ENCODE measurements at regions of chr20 and their contacts with region 1.

Region 1: GRCh38 chr20:35092524-35093266 is at the start of gene TRPC4AP:
- DNase-seq: peak; percentile 94 to 99
- H3K4me3 ChIP-seq: peak within 1 kb of the TSS; percentile 79
- H3K4me3 Mint-ChIP-seq: peak within 1 kb of the TSS; percentile 86
- H3K27ac Mint-ChIP-seq: peak within 1 kb of the TSS; percentile 95
- H3K4me1 ChIP-seq: peaks cover 16% of the 10 kb centered on the region
- H3K4me1 Mint-ChIP-seq: peaks cover 20% of the 10 kb centered on the region
- H3K27me3 ChIP-seq: no peaks in the 10 kb centered on the region
- H3K27me3 Mint-ChIP-seq: no peaks in the 10 kb centered on the region
- CTCF ChIP-seq: peak; percentile 99 to 100
- total RNA-seq, gene TRPC4AP: 144 and 146 TPM in 2 replicates

Region 2: GRCh38 chr20:34781220-34781619 is 311.5 kb before region 1 on chr20:
- CTCF ChIA-PET with region 1: no interaction called
- POLR2A ChIA-PET with region 1: no interaction called
- intact Hi-C with region 1: no loop called
- DNase-seq: no peak
- H3K4me3 ChIP-seq: no peak overlapping the region
- H3K4me3 Mint-ChIP-seq: no peak overlapping the region
- H3K27ac Mint-ChIP-seq: no peak overlapping the region
- H3K4me1 ChIP-seq: no peaks in the 10 kb centered on the region
- H3K4me1 Mint-ChIP-seq: peaks cover 2% of the 10 kb centered on the region
- H3K27me3 ChIP-seq: no peaks in the 10 kb centered on the region
- H3K27me3 Mint-ChIP-seq: no peaks in the 10 kb centered on the region
- CTCF ChIP-seq: no peak

Region 3: DNA sequence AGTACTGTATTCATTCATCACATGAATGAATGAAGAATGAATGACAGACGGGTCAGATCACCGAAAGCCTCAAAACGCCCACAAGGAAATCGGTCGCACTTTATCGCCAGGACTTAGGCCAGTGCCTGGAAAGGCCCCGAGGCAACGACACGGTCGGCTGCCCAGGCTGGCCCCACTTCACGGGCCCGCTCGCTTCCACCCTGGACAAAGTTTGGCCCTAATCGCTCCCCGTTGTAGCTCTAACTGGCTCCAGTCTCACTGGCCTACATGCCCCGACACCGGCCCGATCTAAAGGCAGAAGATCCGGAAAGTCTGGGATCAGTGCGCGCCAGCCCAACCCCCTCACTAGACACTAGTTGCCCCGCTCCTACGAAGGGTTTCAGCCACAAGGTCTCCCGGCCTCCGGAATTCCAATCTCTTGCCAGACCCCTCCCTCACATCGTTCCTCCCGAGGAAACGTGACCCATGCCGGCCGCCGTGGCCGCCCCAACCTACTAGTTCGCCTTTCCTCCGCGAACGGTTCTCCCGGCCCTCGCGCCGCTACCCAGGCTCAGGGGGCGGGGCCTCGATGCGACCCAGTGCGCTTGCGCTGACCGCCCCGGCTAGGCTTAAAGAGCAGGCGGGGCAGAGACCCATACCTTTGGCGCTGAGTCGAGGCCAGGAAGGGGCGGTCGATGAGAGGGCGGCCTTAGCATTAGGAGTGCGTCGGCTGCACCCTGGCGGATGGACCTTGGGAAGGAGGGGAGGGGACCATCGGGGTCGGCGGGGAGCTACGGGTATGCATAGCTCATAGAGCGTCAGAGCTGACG is 137.3 kb before region 1 on chr20 and contains the starts of genes GSS and MYH7B:
- CTCF ChIA-PET with region 1: interaction called, 9 read pairs
- POLR2A ChIA-PET with region 1: interaction called, 5 read pairs
- intact Hi-C with region 1: loop called (anchors 1 kb)
- DNase-seq: peak; percentile 100
- H3K4me3 ChIP-seq: peak within 1 kb of the TSS; percentile 57
- H3K4me3 Mint-ChIP-seq: peak within 1 kb of the TSS; percentile 90
- H3K27ac Mint-ChIP-seq: peak within 1 kb of the TSS; percentile 96
- H3K4me1 ChIP-seq: peaks cover 5% of the 10 kb centered on the region
- H3K4me1 Mint-ChIP-seq: peaks cover 25% of the 10 kb centered on the region
- H3K27me3 ChIP-seq: no peaks in the 10 kb centered on the region
- H3K27me3 Mint-ChIP-seq: no peaks in the 10 kb centered on the region
- CTCF ChIP-seq: peak; percentile 64 to 83
- total RNA-seq, gene GSS: 138 TPM in 2 replicates
- total RNA-seq, gene MYH7B: 1.9 and 2.5 TPM in 2 replicates

Region 4: GRCh38 chr20:35104685-35105295 is 12.1 kb after region 1 on chr20:
- CTCF ChIA-PET with region 1: interaction called, 12 read pairs
- POLR2A ChIA-PET with region 1: no interaction called
- intact Hi-C with region 1: no loop called
- DNase-seq: no peak
- H3K4me3 ChIP-seq: no peak overlapping the region
- H3K4me3 Mint-ChIP-seq: no peak overlapping the region
- H3K27ac Mint-ChIP-seq: no peak overlapping the region
- H3K4me1 ChIP-seq: no peaks in the 10 kb centered on the region
- H3K4me1 Mint-ChIP-seq: no peaks in the 10 kb centered on the region
- H3K27me3 ChIP-seq: no peaks in the 10 kb centered on the region
- H3K27me3 Mint-ChIP-seq: peaks cover 8% of the 10 kb centered on the region
- CTCF ChIP-seq: no peak

Region 5: GRCh38 chr20:35120012-35120701 is 27.5 kb after region 1 on chr20:
- CTCF ChIA-PET with region 1: interaction called, 21 read pairs
- POLR2A ChIA-PET with region 1: no interaction called
- intact Hi-C with region 1: no loop called
- DNase-seq: no peak
- H3K4me3 ChIP-seq: no peak overlapping the region
- H3K4me3 Mint-ChIP-seq: no peak overlapping the region
- H3K27ac Mint-ChIP-seq: no peak overlapping the region
- H3K4me1 ChIP-seq: no peaks in the 10 kb centered on the region
- H3K4me1 Mint-ChIP-seq: peaks cover 8% of the 10 kb centered on the region
- H3K27me3 ChIP-seq: no peaks in the 10 kb centered on the region
- H3K27me3 Mint-ChIP-seq: no peaks in the 10 kb centered on the region
- CTCF ChIP-seq: no peak

Region 6: DNA sequence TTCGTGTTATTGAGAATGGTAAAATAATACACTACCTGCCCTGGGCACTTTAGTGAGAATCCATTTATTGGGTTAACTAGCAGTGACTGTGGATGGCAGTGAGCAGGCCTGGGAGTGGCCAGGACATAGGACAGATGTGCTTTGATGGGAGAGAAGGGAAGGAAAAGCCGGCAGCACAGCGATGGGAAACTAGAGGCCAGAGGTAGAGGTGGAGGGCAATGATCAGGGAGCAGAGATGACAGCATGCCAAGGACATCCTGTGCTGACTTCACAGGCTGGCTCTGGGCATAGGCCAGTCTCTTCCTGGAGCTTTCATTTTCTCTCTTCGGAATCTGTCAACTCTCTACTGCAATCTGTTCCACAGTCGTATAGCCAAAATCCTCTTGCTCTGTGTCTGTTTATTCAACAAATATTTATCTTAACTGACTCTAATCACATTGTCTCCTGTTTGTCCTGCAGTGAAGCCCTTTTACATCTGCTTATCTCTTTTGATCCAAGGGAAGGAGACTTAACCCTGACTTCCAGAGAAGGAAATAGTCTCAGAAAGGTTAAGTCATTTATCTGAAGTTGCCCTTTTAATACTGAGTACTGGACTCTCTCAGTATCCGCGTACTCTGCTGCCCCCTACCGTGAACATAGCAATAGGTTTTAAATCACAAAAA is 115.4 kb after region 1 on chr20:
- CTCF ChIA-PET with region 1: interaction called, 57 read pairs
- POLR2A ChIA-PET with region 1: no interaction called
- intact Hi-C with region 1: loop called (anchors 1 kb)
- DNase-seq: peak; percentile 93 to 96
- H3K4me3 ChIP-seq: no peak overlapping the region; the same call in 1 of the 2 replicates
- H3K4me3 Mint-ChIP-seq: no peak overlapping the region
- H3K27ac Mint-ChIP-seq: no peak overlapping the region
- H3K4me1 ChIP-seq: peaks cover 21% of the 10 kb centered on the region; the same call in 1 of the 2 replicates
- H3K4me1 Mint-ChIP-seq: peaks cover 5% of the 10 kb centered on the region
- H3K27me3 ChIP-seq: no peaks in the 10 kb centered on the region
- H3K27me3 Mint-ChIP-seq: no peaks in the 10 kb centered on the region
- CTCF ChIP-seq: peak; percentile 92 to 98

Region 7: GRCh38 chr20:35269055-35269781 is 176.5 kb after region 1 on chr20:
- CTCF ChIA-PET with region 1: interaction called, 49 read pairs
- POLR2A ChIA-PET with region 1: interaction called, 4 read pairs
- intact Hi-C with region 1: loop called (anchors 2 kb)
- DNase-seq: peak; percentile 88 to 93
- H3K4me3 ChIP-seq: no peak overlapping the region
- H3K4me3 Mint-ChIP-seq: no peak overlapping the region
- H3K27ac Mint-ChIP-seq: peak overlapping the region; percentile 38
- H3K4me1 ChIP-seq: peaks cover 19% of the 10 kb centered on the region
- H3K4me1 Mint-ChIP-seq: peaks cover 21% of the 10 kb centered on the region
- H3K27me3 ChIP-seq: no peaks in the 10 kb centered on the region
- H3K27me3 Mint-ChIP-seq: no peaks in the 10 kb centered on the region
- CTCF ChIP-seq: peak; percentile 97 to 99

Region 8: GRCh38 chr20:35284267-35284991 is 191.7 kb after region 1 on chr20 and contains the start of gene EIF6:
- CTCF ChIA-PET with region 1: interaction called, 10 read pairs
- POLR2A ChIA-PET with region 1: interaction called, 7 read pairs
- intact Hi-C with region 1: no loop called
- DNase-seq: peak; percentile 97 to 98
- H3K4me3 ChIP-seq: peak within 1 kb of the TSS; percentile 95
- H3K4me3 Mint-ChIP-seq: peak within 1 kb of the TSS; percentile 84
- H3K27ac Mint-ChIP-seq: peak within 1 kb of the TSS; percentile 87
- H3K4me1 ChIP-seq: peaks cover 28% of the 10 kb centered on the region
- H3K4me1 Mint-ChIP-seq: peaks cover 18% of the 10 kb centered on the region
- H3K27me3 ChIP-seq: no peaks in the 10 kb centered on the region
- H3K27me3 Mint-ChIP-seq: no peaks in the 10 kb centered on the region
- CTCF ChIP-seq: no peak
- total RNA-seq, gene EIF6: 403 and 420 TPM in 2 replicates